GM12878 (cell line): ENCODE measurements at regions of chr10 and their contacts with region 1.

Region 1: DNA sequence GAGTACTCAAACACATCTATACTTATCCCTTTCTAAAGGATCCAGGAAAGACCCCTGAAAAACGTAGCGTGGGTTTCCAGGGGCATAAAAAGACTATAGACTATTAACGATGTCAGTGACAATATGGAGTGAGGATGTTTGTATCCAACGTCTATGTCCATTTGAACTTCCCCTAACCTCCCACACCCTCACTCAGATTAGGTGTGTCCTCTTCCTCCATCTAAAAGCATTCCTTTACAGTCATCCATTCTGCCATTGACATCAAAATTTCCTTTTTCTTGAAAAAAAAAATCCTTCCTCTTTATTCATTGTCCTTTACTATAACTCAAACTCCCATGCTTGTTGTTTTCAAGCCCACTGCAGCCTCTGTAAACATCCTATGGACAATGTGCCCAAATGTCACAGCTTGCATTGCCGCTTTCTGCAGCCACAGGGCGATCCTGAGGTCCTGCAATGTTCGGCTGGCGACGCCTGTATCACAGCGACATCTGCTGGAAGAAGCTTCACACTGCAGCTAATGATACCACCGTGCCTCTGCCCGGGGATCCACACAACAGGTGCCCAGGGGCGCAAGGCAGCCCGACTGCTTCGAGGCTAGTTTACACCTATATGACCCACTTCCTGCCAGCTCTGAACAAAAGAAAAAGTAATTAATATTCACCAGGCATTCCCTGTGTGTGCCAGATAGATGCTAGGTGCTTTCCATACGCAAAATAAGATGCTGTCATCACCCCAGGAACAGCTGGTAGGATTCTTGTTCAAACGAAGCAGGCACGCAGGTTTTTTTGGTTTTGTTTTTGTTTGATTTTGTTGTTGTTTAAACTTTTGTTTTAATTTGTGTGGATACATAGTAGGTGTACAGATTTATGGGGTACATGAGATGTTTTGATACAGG is 267.9 kb upstream of the GHITM start:
- DNase-seq: peak; percentile 47
- ATAC-seq: peak; percentile 99
- H3K4me3 ChIP-seq: no peak overlapping the region
- H3K27ac ChIP-seq: no peak overlapping the region
- H3K4me1 ChIP-seq: no peaks in the 10 kb centered on the region
- H3K27me3 ChIP-seq: no peaks in the 10 kb centered on the region
- CTCF ChIP-seq: peak; percentile 95
- EP300 ChIP-seq: no peak
- POLR2A ChIP-seq: no peak
- RAD21 ChIP-seq: peak; percentile 100

Region 2: DNA sequence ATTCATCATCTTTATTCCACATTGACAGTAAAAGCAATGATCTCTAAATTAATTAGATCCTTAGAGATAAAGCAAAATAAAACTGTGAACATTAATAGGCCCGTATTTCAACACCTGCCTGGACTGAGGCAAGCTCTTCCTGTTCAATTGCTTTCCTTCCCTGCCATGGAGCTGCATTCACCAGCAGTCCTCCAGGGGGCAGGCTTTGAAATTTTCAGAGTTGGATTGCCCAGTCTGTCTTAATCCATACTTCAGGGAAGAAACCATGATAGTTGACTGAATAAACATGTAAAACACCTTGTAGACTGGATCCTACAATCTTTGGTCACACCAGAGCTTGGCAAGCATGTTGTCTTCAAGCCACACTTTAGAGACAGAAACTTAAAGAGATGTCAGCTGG is 1059.8 kb before region 1 on chr10:
- CTCF ChIA-PET with region 1: interaction called, 11 read pairs
- POLR2A ChIA-PET with region 1: no interaction called
- RAD21 ChIA-PET with region 1: no interaction called
- SMC1A ChIA-PET with region 1: no interaction called
- in situ Hi-C with region 1: loop called (anchors 5 kb)
- intact Hi-C with region 1: no loop called
- DNase-seq: no peak
- ATAC-seq: peak; percentile 71
- H3K4me3 ChIP-seq: no peak overlapping the region
- H3K27ac ChIP-seq: no peak overlapping the region
- H3K4me1 ChIP-seq: no peaks in the 10 kb centered on the region
- H3K27me3 ChIP-seq: no peaks in the 10 kb centered on the region
- CTCF ChIP-seq: peak; percentile 27 to 63 (median 53); a peak in 5 of 6 replicates
- EP300 ChIP-seq: no peak
- POLR2A ChIP-seq: no peak
- RAD21 ChIP-seq: peak; percentile 55; the same call in 1 of the 2 replicates

Region 3: GRCh38 chr10:82969405-82969804 is 902.0 kb before region 1 on chr10:
- CTCF ChIA-PET with region 1: interaction called, 11 read pairs
- POLR2A ChIA-PET with region 1: no interaction called
- RAD21 ChIA-PET with region 1: no interaction called
- SMC1A ChIA-PET with region 1: interaction called, 8 read pairs
- in situ Hi-C with region 1: no loop called
- intact Hi-C with region 1: no loop called
- DNase-seq: no peak
- ATAC-seq: peak; percentile 66
- H3K4me3 ChIP-seq: no peak overlapping the region
- H3K27ac ChIP-seq: no peak overlapping the region
- H3K4me1 ChIP-seq: no peaks in the 10 kb centered on the region
- H3K27me3 ChIP-seq: no peaks in the 10 kb centered on the region
- CTCF ChIP-seq: peak in 2 of 3 experiments; percentile 18 to 55; a peak in 3 of 6 replicates
- EP300 ChIP-seq: no peak
- POLR2A ChIP-seq: no peak
- RAD21 ChIP-seq: peak; percentile 90

Region 4: GRCh38 chr10:83539528-83540308 is 331.7 kb before region 1 on chr10:
- CTCF ChIA-PET with region 1: interaction called, 3 read pairs
- POLR2A ChIA-PET with region 1: no interaction called
- RAD21 ChIA-PET with region 1: interaction called, 3 read pairs
- SMC1A ChIA-PET with region 1: interaction called, 9 read pairs
- in situ Hi-C with region 1: no loop called
- intact Hi-C with region 1: loop called (anchors 10 kb)
- DNase-seq: peak; percentile 74
- ATAC-seq: peak; percentile 75
- H3K4me3 ChIP-seq: no peak overlapping the region
- H3K27ac ChIP-seq: peak overlapping the region; percentile 70
- H3K4me1 ChIP-seq: peaks cover 31% of the 10 kb centered on the region
- H3K27me3 ChIP-seq: no peaks in the 10 kb centered on the region
- CTCF ChIP-seq: no peak
- EP300 ChIP-seq: no peak
- POLR2A ChIP-seq: no peak
- RAD21 ChIP-seq: peak; percentile 15; the same call in 1 of the 2 replicates

Region 5: DNA sequence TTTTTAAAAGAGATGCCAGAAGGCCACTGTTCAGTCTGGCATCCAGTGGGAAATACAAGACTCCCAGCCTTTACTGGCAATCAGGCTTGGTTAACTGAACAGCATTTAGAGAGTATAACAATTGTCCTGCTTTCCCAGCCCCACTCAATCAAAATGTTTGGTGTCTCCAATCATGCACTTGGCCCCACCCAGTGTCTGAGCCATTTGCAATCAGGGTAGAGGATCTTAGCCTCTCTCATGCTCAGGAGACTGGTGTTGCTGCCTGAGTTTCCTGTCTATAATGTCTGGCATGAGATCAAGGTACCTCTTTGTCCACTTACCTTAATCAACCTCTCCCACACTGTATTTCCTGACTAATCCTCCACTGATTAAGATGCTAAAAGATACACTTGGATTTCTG is 22.3 kb before region 1 on chr10:
- CTCF ChIA-PET with region 1: interaction called, 16 read pairs
- POLR2A ChIA-PET with region 1: no interaction called
- RAD21 ChIA-PET with region 1: no interaction called
- SMC1A ChIA-PET with region 1: no interaction called
- in situ Hi-C with region 1: no loop called
- intact Hi-C with region 1: no loop called
- DNase-seq: no peak
- ATAC-seq: no peak
- H3K4me3 ChIP-seq: no peak overlapping the region
- H3K27ac ChIP-seq: no peak overlapping the region
- H3K4me1 ChIP-seq: no peaks in the 10 kb centered on the region
- H3K27me3 ChIP-seq: no peaks in the 10 kb centered on the region
- CTCF ChIP-seq: no peak
- EP300 ChIP-seq: no peak
- POLR2A ChIP-seq: no peak
- RAD21 ChIP-seq: no peak

Region 6: DNA sequence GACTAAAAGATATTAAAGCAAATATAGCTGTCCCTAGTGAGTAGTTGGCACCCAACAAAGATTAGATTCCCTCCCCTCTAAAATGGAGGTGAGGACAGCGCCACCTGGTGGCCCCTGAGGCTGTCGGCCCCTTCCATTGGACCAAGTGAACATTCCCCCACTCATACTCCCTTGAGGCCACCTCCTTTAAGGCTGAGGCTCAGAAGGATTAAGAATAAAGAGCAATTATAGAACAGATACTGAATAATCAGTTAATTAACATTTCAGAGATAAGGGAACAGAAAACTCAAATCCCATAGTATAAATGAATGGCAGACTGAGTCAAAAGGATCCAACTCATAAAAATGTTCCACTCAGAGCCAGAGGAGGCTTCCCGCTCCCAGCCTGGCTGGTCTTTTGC is 137.4 kb after region 1 on chr10:
- CTCF ChIA-PET with region 1: no interaction called
- POLR2A ChIA-PET with region 1: no interaction called
- RAD21 ChIA-PET with region 1: interaction called, 3 read pairs
- SMC1A ChIA-PET with region 1: no interaction called
- in situ Hi-C with region 1: no loop called
- intact Hi-C with region 1: loop called (anchors 5 kb)
- DNase-seq: no peak
- ATAC-seq: peak; percentile 86
- H3K4me3 ChIP-seq: no peak overlapping the region
- H3K27ac ChIP-seq: no peak overlapping the region
- H3K4me1 ChIP-seq: peaks cover 10% of the 10 kb centered on the region
- H3K27me3 ChIP-seq: no peaks in the 10 kb centered on the region; a peak in 1 of 4 replicates
- CTCF ChIP-seq: peak; percentile 72 to 89 (median 88)
- EP300 ChIP-seq: no peak
- POLR2A ChIP-seq: no peak
- RAD21 ChIP-seq: peak; percentile 50; the same call in 1 of the 2 replicates